ENCODE measurements at regions of chr2 and their contacts with region 1.

Region 1: GRCh38 chr2:187842978-187843847 is 289.0 kb upstream of the TFPI start:
- DNase-seq: no peak
- H3K4me3 ChIP-seq: no peak overlapping the region
- H3K27ac ChIP-seq: no peak overlapping the region
- H3K4me1 ChIP-seq: no peaks in the 10 kb centered on the region
- H3K27me3 ChIP-seq: no peaks in the 10 kb centered on the region
- CTCF ChIP-seq: peak; percentile 47 to 61 (median 57)
- POLR2A ChIP-seq: no peak

Region 2: GRCh38 chr2:187527262-187527661 is 316.0 kb before region 1 on chr2:
- intact Hi-C with region 1: no loop called
- DNase-seq: no peak
- H3K4me3 ChIP-seq: no peak overlapping the region
- H3K27ac ChIP-seq: no peak overlapping the region
- H3K4me1 ChIP-seq: no peaks in the 10 kb centered on the region
- H3K27me3 ChIP-seq: no peaks in the 10 kb centered on the region
- CTCF ChIP-seq: no peak
- POLR2A ChIP-seq: no peak

Region 3: DNA sequence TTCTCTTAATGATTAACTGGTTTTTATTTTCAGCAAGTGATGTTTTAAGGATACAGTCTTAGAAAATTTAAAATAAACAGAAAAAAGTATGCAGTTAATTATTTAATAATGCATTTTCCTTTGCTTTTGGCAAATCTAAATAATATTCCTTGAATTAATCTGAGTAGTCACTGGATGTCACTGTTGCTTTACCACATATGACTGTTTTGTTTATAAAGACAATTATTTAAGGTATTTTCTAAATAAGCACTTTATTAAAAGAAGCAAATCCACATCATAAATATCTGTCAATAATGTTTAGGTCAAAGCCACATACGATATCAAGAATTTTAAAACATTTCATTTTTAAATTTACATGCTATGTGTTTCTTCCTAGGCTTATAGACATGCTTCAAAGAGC is 248.4 kb before region 1 on chr2:
- intact Hi-C with region 1: loop called (anchors 10 kb)
- DNase-seq: no peak
- H3K4me3 ChIP-seq: no peak overlapping the region
- H3K27ac ChIP-seq: no peak overlapping the region
- H3K4me1 ChIP-seq: no peaks in the 10 kb centered on the region
- H3K27me3 ChIP-seq: no peaks in the 10 kb centered on the region
- CTCF ChIP-seq: no peak
- POLR2A ChIP-seq: no peak

Measured in testis (tissue), 5 donors.